ENCODE measurements at regions of chr1 and their contacts with region 1.

Region 1: DNA sequence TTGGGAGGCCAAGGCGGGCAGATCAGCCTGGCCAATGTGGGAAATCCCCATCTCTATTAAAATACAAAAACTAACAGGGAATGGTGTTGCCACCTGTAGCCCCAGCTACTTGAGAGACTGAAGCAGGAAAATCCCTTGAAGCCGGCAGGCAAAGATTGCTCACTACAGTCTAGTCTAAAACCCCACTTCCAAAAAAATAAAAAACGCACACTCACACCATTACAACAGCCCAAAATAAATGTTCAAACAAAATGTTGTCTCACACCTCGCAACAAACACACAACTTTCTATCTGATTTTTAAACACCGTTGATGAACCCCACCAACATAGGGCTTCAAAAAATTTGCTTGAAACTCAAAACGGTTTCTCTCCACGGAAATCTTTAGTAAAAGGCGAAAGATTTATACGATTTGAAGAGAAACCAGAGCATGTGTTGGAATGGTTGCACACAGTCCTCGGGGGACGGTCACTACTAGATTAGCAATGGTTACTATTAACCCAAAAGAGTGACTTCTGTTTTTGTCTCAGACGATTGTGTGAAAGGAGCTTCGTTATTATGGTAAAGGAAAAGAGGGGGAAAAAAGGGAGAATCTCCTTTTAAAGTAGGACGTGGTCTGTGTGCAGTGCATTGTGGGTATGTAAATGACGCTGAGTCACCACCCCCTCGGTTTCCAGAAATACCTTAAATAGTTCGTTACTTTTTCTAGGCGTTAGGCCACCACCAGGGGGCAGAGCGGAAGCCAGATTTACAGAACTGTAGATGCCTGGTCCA is at the start of gene RNU5D-1:
- DNase-seq: peak; percentile 90 to 94 (median 93)
- ATAC-seq: peak; percentile 84 to 91 (median 87)
- H3K4me3 ChIP-seq: peak within 1 kb of the TSS in 9 of 12 donors; percentile 17 to 48 (median 32)
- H3K27ac ChIP-seq: peak within 1 kb of the TSS; percentile 70 to 96 (median 84)
- H3K4me1 ChIP-seq: peaks cover 0 to 30% (median 9%) of the 10 kb centered on the region in 12 donors
- H3K27me3 ChIP-seq: no peaks in the 10 kb centered on the region
- CTCF ChIP-seq: peak; percentile 74 to 91 (median 82)
- POLR2A ChIP-seq: peak in 1 of 2 donors; percentile 58
- total RNA-seq, gene RNU5D-1: not detected

Region 2: DNA sequence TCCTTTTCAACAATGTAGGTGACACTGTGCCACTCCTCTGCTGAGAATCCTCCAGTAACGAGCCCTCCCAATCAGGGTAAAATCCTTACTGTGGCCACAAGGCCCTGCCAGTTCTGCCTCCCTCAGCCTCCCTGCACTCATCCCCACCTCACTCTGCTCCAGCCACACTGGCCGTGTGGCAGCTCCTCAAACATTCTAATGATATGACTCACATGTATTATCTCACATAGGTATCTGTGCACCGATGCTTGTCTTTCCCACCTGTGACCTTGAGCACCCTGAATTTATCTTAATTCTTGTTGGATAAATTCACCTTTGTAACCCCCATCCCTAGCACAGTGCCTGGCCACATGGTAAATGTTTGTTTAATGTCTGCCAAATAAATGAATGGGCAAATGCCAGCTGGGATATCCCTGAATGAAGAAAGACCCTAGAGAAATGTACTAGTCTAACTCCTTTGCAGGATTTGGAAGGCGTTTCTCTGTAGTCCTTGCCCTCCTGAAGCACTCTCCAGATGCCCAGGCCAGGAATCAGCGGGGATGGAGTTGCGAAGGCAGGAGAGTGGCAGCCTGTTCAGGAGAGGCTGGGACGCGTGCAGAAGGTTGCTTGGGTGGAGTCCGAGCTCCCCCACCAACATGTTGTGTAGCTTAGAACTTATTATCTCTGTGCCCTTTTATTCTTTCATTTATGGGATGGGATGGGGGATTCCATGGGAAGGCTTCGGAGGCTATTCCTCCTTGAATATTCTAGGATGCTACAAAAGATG is 162.6 kb before region 1 on chr1:
- intact Hi-C with region 1: no loop called
- DNase-seq: no peak
- ATAC-seq: no peak
- H3K4me3 ChIP-seq: no peak overlapping the region
- H3K27ac ChIP-seq: no peak overlapping the region
- H3K4me1 ChIP-seq: no peaks in the 10 kb centered on the region
- H3K27me3 ChIP-seq: peaks cover 0 to 10% (median 0%) of the 10 kb centered on the region in 9 donors
- CTCF ChIP-seq: no peak
- POLR2A ChIP-seq: no peak

Region 3: DNA sequence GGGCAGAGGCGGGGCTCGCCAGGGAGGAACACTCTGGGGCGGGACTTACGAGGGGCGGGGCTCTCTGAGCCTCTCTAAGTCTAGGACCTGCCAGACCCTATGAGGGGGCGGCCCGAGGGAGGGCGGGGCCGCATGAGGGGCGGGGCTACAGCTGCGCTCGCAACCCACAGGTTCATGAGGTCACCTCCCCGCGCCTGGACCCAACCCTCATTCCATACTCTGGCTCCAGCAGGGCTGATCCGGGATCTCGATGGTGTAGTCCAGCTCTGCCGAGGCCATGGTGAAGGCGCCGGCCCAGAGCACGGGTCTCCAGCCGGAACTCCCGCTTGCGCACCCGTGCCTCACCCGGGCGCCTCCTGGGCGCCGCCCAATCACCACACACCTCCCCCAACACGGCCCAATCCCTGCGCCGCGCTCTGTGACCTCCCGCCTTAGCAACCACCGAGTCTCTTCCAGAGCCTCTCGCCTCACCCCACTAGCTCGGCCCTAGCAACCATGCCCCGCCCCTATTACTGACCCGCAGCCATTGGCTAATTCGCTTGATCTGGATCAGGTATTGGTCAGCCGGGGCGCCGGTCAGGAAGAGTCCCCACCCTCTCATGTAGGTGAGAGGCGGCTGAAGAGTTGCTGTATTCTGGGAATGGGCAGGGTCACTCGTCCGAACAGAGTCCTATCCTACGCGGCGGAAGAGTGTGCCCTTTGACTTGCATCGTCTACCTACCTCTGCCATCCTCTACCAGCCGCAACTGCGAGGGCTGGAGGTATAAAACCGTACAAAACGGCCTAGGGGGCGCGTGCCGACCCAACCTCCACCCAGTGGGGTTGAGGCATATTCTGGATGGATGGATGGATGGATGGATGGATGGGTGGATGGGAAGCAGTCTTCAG is 56.6 kb before region 1 on chr1 and contains the starts of genes ARMH1 and TMEM53:
- intact Hi-C with region 1: loop called in 1 of 10 experiments (anchors 10 kb)
- DNase-seq: peak; percentile 99 to 100 (median 99)
- ATAC-seq: peak; percentile 96 to 98 (median 97)
- H3K4me3 ChIP-seq: peak within 1 kb of the TSS; percentile 30 to 85 (median 68)
- H3K27ac ChIP-seq: peak within 1 kb of the TSS; percentile 81 to 98 (median 96)
- H3K4me1 ChIP-seq: peaks cover 0 to 70% (median 21%) of the 10 kb centered on the region in 12 donors
- H3K27me3 ChIP-seq: no peaks in the 10 kb centered on the region
- CTCF ChIP-seq: no peak
- POLR2A ChIP-seq: peak in 1 of 2 donors; percentile 56
- total RNA-seq, gene ARMH1: 0.33 to 9.9 (median 0.64) TPM in 6 of 9 donors, not detected in the others
- total RNA-seq, gene TMEM53: 8.5 to 18.1 (median 12.5) TPM

Region 4: DNA sequence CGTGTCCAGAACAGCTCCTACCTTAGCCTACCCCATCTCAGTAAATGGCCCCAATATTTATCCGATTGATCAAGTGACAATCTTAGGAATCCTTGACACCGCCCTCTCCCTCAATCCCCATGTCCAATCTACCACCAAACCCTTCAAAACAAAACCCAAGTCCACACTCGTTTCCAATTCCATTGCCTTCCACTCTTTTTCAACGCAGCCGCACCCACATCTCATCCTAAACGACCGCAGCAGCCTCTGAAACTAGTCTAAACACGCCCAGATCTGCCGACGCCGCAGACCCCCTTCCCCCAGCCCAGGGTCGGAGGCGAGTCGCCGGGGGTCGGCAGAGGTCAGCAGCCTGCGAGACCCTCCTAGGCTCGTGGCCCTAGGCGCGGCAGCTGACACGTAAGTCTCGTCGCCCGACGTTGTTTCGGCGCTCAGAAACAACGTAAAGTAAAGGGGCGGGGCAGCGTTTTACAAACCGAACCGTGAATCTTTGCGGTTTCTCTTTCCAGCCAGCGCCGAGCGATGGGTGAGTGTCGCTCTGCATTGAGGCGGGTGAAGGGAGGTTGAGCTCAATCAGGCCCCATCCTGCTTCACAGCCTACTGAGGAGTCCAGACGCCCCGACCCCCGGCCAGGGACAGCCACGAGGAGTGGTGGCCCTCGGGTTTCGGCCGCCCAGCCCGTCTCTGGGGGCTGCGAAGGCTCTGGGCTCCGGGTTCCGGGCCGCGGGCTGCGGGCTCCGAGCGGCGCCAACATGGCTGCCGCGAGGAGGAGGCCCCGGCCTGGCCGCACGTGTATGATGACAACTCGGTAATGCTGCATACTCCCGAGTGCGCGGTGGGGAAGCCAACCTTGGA is 44.4 kb after region 1 on chr1 and contains the start of gene RPS8:
- intact Hi-C with region 1: loop called in 5 of 10 experiments (anchors 2 to 10 kb)
- DNase-seq: peak; percentile 92 to 96 (median 94)
- ATAC-seq: peak; percentile 89 to 96 (median 94)
- H3K4me3 ChIP-seq: peak within 1 kb of the TSS; percentile 59 to 95 (median 85)
- H3K27ac ChIP-seq: peak within 1 kb of the TSS; percentile 85 to 99 (median 95)
- H3K4me1 ChIP-seq: peaks cover 2 to 38% (median 23%) of the 10 kb centered on the region in 12 donors
- H3K27me3 ChIP-seq: no peaks in the 10 kb centered on the region
- CTCF ChIP-seq: peak in 1 of 12 donors; percentile 13
- POLR2A ChIP-seq: peak; percentile 47 to 96
- total RNA-seq, gene RPS8: 576 to 1,019 (median 853) TPM

Region 5: GRCh38 chr1:44786138-44786840 is 55.4 kb after region 1 on chr1:
- intact Hi-C with region 1: loop called in 2 of 10 experiments (anchors 2 to 10 kb)
- DNase-seq: peak; percentile 64 to 87 (median 68)
- ATAC-seq: peak; percentile 56 to 77 (median 71)
- H3K4me3 ChIP-seq: peak overlapping the region; percentile 2 to 63 (median 52)
- H3K27ac ChIP-seq: peak overlapping the region in 11 of 12 donors; percentile 11 to 68 (median 53)
- H3K4me1 ChIP-seq: peaks cover 0 to 33% (median 25%) of the 10 kb centered on the region in 12 donors
- H3K27me3 ChIP-seq: no peaks in the 10 kb centered on the region
- CTCF ChIP-seq: peak; percentile 93 to 99 (median 98)
- POLR2A ChIP-seq: no peak

Region 6: GRCh38 chr1:44798481-44799365 is 67.8 kb after region 1 on chr1:
- intact Hi-C with region 1: no loop called
- DNase-seq: peak in 2 of 5 donors; percentile 21 to 26
- ATAC-seq: no peak
- H3K4me3 ChIP-seq: no peak overlapping the region
- H3K27ac ChIP-seq: peak overlapping the region in 11 of 12 donors; percentile 91 to 98 (median 95)
- H3K4me1 ChIP-seq: peaks cover 2 to 38% (median 25%) of the 10 kb centered on the region in 12 donors
- H3K27me3 ChIP-seq: no peaks in the 10 kb centered on the region
- CTCF ChIP-seq: no peak
- POLR2A ChIP-seq: no peak

Region 7: DNA sequence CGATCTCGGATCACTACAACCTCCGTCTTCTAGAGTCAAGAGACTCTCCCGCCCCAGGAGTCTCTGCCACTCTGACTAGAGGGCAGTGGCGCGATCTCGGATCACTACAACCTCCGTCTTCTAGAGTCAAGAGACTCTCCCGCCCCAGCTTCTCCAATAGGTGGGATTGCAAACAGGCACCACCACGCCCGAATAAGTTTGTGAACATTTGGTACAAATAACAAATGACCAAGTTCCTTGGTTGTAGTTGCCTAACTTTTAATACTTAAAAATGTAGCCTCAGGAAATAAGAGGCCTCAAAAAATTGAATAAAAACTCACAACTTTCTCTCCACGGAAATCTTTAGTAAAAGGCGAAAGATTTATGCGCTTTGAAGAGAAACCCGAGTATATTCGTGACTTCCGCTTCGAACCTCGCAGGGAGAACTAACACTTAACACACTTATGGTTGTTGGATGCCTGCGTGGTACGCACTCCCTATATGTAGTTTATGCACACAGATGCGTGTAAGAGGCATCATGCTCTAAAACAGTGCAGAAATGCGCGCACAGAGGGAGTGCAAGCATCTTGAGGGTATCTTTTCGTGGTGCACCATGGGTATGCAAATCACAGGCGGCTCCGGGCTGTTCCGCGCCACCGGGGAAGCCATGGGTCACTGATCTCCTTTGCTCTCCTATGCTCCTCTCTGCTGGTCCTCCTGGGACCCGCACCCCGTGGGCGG is 88.8 kb after region 1 on chr1:
- intact Hi-C with region 1: loop called in 1 of 10 experiments (anchors 10 kb)
- DNase-seq: peak; percentile 82 to 90 (median 85)
- ATAC-seq: peak; percentile 89 to 93 (median 89)
- H3K4me3 ChIP-seq: peak overlapping the region; percentile 32 to 79 (median 64)
- H3K27ac ChIP-seq: peak overlapping the region; percentile 85 to 100 (median 94)
- H3K4me1 ChIP-seq: peaks cover 0 to 33% (median 15%) of the 10 kb centered on the region in 12 donors
- H3K27me3 ChIP-seq: no peaks in the 10 kb centered on the region
- CTCF ChIP-seq: peak in 3 of 12 donors; percentile 8 to 26 (median 10)
- POLR2A ChIP-seq: peak; percentile 52 to 61

Region 8: GRCh38 chr1:44862829-44863401 is 132.0 kb after region 1 on chr1:
- intact Hi-C with region 1: no loop called
- DNase-seq: no peak
- ATAC-seq: no peak
- H3K4me3 ChIP-seq: no peak overlapping the region
- H3K27ac ChIP-seq: no peak overlapping the region
- H3K4me1 ChIP-seq: peaks cover 0 to 33% (median 11%) of the 10 kb centered on the region in 12 donors
- H3K27me3 ChIP-seq: no peaks in the 10 kb centered on the region
- CTCF ChIP-seq: no peak
- POLR2A ChIP-seq: no peak

Region 9: GRCh38 chr1:44907893-44908292 is 177.0 kb after region 1 on chr1:
- intact Hi-C with region 1: no loop called
- DNase-seq: no peak
- ATAC-seq: peak in 1 of 4 donors; percentile 34
- H3K4me3 ChIP-seq: no peak overlapping the region
- H3K27ac ChIP-seq: peak overlapping the region in 2 of 12 donors; percentile 5 to 31
- H3K4me1 ChIP-seq: peaks cover 0 to 18% (median 2%) of the 10 kb centered on the region in 12 donors
- H3K27me3 ChIP-seq: no peaks in the 10 kb centered on the region
- CTCF ChIP-seq: peak in 4 of 12 donors; percentile 7 to 29 (median 20)
- POLR2A ChIP-seq: no peak

Region 10: DNA sequence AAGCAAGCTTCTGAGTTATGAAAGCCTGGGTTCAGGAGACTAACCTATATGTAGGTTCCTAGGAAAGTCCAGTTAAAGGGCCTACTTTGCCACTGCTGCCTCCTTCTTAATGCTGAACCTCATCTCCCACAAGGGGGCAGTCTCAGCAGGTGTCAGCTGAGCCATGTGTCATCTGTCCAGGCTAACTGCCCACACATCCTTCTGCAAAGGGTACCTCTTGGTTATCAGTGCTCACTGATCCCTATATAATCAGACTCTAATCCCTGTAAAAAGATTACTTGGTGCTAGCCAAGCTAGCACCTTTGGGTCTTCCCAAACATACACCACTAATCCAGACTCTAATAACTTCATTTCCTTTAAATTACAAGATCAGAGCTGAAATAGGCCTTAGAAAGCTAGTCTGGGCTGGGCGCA is 781.7 kb after region 1 on chr1:
- intact Hi-C with region 1: loop called in 1 of 10 experiments (anchors 10 kb)
- DNase-seq: peak in 4 of 5 donors; percentile 54 to 62 (median 56)
- ATAC-seq: peak in 3 of 4 donors; percentile 66 to 70 (median 69)
- H3K4me3 ChIP-seq: no peak overlapping the region
- H3K27ac ChIP-seq: no peak overlapping the region
- H3K4me1 ChIP-seq: peaks cover 0 to 28% (median 16%) of the 10 kb centered on the region in 12 donors
- H3K27me3 ChIP-seq: no peaks in the 10 kb centered on the region
- CTCF ChIP-seq: peak; percentile 51 to 81 (median 68)
- POLR2A ChIP-seq: no peak

Measured in heart left ventricle (tissue), 16 donors.